Prostate gland (tissue), 2 donors: ENCODE measurements at regions of chr11 and their contacts with region 1.

Region 1: DNA sequence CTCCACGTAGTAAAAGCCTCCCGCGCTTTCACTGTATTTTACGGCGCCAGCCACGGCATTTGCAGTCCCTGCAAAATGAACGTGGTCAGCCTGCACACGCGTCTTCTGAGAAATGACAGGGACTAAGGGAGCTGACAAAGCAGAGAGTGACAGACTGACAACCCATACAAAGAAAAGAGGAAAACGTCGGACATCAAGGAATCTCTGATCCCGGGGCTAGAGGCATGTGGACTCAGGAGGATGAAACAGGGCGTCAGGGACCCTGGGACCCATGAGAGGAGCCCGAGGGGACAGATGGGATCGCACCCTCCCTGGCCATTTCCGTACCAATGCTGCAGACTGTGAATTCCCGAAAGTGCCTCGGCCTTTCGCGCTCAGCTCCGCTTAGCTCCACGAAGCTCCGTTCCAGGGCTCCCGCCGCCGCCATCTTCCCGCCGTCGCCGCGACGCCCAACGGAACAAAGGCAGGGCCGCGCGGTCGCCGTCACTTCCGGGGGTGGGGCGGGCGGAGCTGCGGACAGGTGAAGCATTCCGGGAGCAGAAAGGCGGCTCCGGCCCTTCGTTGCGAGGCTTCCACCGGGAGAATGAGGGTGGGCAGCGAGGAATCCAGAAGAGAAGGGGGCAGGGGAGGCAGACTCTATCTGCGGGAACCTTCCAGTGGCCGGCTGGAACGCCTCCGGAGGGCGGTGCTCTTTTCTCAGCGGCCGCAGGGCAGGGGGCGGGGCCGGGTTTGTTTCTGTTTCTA is at the start of gene NUP160:
- DNase-seq: peak; percentile 85
- H3K4me3 ChIP-seq: peak within 1 kb of the TSS; percentile 63 to 90
- H3K27ac ChIP-seq: peak within 1 kb of the TSS; percentile 94 to 98
- H3K4me1 ChIP-seq: no peaks in the 10 kb centered on the region
- H3K27me3 ChIP-seq: no peaks in the 10 kb centered on the region
- CTCF ChIP-seq: peak in 2 of 4 experiments; percentile 19 to 23
- POLR2A ChIP-seq: peak; percentile 80
- total RNA-seq, gene NUP160: 17.9 to 43.2 TPM

Region 2: DNA sequence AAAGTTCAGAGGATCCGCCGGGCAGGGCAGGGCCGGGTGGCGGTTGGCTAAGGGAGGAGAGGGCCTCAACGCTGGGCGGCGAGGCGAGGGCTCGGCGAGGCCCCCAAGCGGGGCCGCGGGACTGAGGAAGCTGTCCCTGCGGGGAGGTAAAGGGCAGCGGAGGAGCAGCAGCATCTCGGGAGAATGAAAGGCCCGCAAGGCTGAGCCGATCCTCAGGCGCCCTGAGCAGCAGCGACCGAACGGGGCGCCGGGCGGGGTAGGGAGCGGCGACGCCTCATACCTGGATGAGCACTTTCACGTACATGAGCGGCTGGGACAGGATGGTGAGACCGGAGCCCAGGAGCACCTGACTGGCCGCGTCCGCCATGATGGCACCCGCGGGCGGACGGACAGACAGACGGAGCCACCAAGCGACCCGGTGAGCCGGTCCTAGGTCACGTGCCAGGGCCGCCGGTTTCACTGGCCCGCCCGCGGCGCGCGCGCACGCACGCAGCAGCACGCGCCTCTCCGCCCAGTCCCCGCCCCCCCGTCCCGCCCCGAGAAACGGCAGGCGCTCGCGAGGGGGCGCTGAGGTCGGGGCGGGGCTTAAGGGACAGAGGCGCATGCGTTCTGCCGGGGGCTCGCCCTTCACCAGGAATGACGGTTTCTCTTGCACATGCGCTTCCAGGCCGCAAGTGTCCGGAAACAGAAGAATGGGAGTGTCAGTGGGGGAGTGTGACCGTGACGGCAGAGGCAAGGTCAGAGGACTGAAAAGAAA is 205.8 kb before region 1 on chr11 and contains the start of gene MTCH2:
- intact Hi-C with region 1: loop called (anchors 2 kb)
- DNase-seq: peak; percentile 94
- H3K4me3 ChIP-seq: peak within 1 kb of the TSS; percentile 62 to 66
- H3K27ac ChIP-seq: peak within 1 kb of the TSS; percentile 87 to 91
- H3K4me1 ChIP-seq: peaks cover 10% of the 10 kb centered on the region
- H3K27me3 ChIP-seq: no peaks in the 10 kb centered on the region
- CTCF ChIP-seq: peak; percentile 50 to 77 (median 54)
- POLR2A ChIP-seq: peak; percentile 68
- total RNA-seq, gene MTCH2: 48.4 to 56.8 TPM

Region 3: GRCh38 chr11:47766305-47767227 is 81.5 kb before region 1 on chr11:
- intact Hi-C with region 1: loop called (anchors 2 kb)
- DNase-seq: peak; percentile 67
- H3K4me3 ChIP-seq: peak overlapping the region; percentile 82 to 89
- H3K27ac ChIP-seq: peak overlapping the region; percentile 99
- H3K4me1 ChIP-seq: no peaks in the 10 kb centered on the region
- H3K27me3 ChIP-seq: no peaks in the 10 kb centered on the region
- CTCF ChIP-seq: no peak
- POLR2A ChIP-seq: peak; percentile 42

Region 4: DNA sequence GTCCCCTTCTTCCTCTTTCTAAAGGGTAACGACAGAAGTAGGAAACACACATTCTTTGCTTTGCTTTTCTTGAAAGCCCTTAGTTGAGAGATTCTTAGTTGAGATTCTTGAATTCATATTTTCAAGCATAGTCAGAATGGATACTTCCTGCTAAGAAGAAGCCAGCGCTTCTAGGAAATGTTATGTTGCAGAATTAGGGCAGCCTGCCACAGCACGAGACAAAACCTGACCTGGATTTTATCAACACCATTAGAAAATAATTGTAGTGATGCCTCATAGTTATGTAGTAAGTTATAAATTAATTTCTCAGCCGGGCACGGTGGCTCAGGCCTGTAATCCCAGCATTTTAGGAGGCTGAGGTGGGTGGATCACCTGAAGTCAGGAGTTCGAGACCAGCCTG is 38.0 kb after region 1 on chr11:
- intact Hi-C with region 1: no loop called
- DNase-seq: peak; percentile 6
- H3K4me3 ChIP-seq: no peak overlapping the region
- H3K27ac ChIP-seq: no peak overlapping the region
- H3K4me1 ChIP-seq: no peaks in the 10 kb centered on the region
- H3K27me3 ChIP-seq: no peaks in the 10 kb centered on the region
- CTCF ChIP-seq: no peak
- POLR2A ChIP-seq: no peak